ENCODE measurements at regions of chr1 and their contacts with region 1.

Region 1: DNA sequence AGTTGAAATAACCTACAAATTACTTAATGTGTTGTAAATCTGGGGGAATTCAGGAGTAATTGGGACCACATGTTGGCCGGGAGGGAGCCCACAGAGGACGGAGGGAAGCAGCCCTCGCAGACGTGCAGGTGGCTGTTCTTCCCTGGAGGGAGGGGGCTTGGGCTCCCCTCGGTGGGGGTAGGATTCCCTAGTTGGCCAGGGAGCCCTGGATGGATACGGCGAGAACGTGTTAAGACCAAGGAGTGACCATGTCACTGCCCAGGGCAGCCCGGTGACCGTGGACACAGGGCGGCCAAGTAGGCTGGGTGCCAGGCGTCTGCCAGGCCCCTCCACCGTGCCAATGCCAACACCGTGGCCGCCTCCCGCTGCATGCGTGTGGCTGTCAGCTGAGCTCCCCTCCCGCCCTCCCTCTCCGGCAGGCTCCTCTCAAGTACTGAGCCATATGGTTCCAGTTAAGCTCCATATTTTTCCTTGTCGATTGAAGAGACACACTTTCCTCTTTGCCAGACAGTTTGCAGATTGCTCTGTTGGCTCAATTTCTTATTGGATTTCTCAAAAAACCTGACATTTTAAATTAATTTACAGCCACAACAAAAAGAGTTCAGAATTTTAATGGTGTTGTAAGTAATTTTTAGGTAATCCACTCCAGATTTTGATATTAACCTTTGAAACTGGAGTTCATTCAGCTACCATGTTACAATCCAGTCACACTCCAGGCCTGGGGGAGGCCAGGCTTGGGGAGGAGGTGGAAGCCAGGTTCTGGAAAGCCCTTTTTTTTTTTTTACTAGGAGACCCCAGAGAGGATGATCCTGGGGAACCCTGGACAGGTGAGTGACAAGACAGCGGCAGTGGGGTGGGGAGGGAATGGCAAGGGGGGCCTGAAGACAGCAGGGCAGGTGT is 71.2 kb downstream of the CASZ1 start:
- DNase-seq: peak; percentile 25
- ATAC-seq: no peak
- H3K4me3 ChIP-seq: no peak overlapping the region
- H3K27ac ChIP-seq: no peak overlapping the region
- H3K4me1 ChIP-seq: peaks cover 43% of the 10 kb centered on the region
- H3K27me3 ChIP-seq: no peaks in the 10 kb centered on the region
- CTCF ChIP-seq: no peak

Region 2: GRCh38 chr1:10686404-10687040 is 38.7 kb before region 1 on chr1:
- CTCF ChIA-PET with region 1: no interaction called
- POLR2A ChIA-PET with region 1: interaction called, 15 read pairs
- intact Hi-C with region 1: no loop called
- DNase-seq: peak; percentile 77
- ATAC-seq: peak; percentile 71
- H3K4me3 ChIP-seq: peak overlapping the region; percentile 49
- H3K27ac ChIP-seq: peak overlapping the region; percentile 94
- H3K4me1 ChIP-seq: peaks cover 25% of the 10 kb centered on the region
- H3K27me3 ChIP-seq: no peaks in the 10 kb centered on the region
- CTCF ChIP-seq: peak; percentile 43; the same call in 1 of the 2 replicates

Measured in PC-3 (cell line).